ENCODE measurements at regions of chr11 and their contacts with region 1.

Region 1: DNA sequence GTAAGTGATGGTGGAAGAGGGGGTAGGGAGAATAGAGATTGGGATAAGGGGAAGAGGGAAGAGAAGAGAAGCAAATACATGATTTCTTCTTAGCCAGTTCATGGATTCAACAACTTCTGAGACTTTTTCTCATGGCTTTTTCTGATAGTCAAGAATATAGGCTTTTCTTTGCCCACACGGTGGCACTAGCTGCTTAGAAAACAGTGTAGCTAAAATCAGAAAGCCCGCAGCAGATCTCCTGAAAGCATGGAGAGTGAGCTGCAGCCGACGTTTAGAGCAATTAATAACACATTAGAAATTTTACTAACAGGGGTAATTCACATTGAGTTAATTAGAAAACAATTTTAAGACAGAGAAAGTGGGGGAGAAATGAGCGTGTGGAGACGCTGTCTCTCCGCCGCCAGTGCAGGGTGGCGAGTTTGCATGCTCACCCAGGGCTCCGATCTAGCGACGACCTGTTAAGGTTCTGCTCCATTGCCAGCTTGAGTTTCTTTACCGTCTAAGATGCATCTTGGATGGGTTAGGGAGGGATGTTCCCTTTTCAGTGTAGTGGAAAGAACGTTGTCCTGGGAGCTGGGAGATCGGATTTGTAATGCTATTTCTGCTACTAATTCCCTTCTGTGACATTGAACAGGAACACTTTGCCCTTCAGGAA is 3.3 kb upstream of the RAG1 start:
- DNase-seq: no peak
- H3K4me3 ChIP-seq: peak overlapping the region; percentile 7; the same call in 1 of the 2 replicates
- H3K27me3 ChIP-seq: peaks cover 10% of the 10 kb centered on the region
- CTCF ChIP-seq: peak; percentile 71

Region 2: DNA sequence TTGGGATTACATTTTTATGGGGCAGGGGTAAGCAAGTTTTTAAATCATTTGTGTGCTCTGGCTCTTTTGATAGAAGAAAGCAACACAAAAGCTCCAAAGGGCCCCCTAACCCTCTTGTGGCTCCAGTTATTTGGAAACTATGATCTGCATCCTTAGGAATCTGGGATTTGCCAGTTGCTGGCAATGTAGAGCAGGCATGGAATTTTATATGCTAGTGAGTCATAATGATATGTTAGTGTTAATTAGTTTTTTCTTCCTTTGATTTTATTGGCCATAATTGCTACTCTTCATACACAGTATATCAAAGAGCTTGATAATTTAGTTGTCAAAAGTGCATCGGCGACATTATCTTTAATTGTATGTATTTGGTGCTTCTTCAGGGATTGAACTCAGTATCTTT is 13.4 kb after region 1 on chr11:
- CTCF ChIA-PET with region 1: interaction called, 46 read pairs
- POLR2A ChIA-PET with region 1: no interaction called
- DNase-seq: peak; percentile 24
- H3K4me3 ChIP-seq: no peak overlapping the region
- H3K27me3 ChIP-seq: peaks cover 2% of the 10 kb centered on the region; the same call in 1 of the 2 replicates
- CTCF ChIP-seq: no peak

Region 3: DNA sequence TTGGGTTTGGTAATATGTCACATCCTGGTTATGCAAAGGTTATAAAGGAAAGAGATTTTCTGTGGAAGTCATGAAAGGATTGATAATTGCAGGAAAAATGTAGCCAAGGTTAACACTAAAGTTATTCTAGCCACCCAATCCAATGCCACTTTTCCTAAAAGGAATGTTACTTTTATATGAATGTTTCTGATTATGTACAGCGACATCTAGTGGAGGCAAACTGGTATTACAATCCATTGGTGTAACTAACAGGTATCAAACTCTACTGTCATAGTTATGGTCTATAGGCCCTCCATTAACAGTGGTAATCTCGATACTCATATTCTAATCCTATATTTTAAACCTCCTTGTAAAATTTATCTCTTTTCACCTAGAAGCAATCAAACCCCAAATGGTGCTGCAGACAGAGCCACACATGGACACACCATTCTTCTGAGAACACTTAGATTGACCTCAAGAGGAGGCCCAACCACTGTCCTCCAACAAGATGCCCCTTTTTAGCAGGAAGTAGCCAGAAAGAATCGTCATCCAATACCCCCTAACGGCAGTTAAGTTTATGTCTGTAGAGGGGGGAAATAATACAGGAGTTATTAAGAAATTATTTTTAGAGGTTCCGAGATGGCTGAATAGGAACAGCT is 108.4 kb after region 1 on chr11:
- CTCF ChIA-PET with region 1: interaction called, 156 read pairs
- POLR2A ChIA-PET with region 1: no interaction called
- DNase-seq: no peak
- H3K4me3 ChIP-seq: no peak overlapping the region
- H3K27me3 ChIP-seq: no peaks in the 10 kb centered on the region
- CTCF ChIP-seq: peak; percentile 64

Region 4: GRCh38 chr11:36738292-36738861 is 173.9 kb after region 1 on chr11:
- CTCF ChIA-PET with region 1: interaction called, 12 read pairs
- POLR2A ChIA-PET with region 1: no interaction called
- DNase-seq: no peak
- H3K4me3 ChIP-seq: no peak overlapping the region
- H3K27me3 ChIP-seq: no peaks in the 10 kb centered on the region
- CTCF ChIP-seq: no peak